ENCODE measurements at regions of chr10 and their contacts with region 1.

Region 1: DNA sequence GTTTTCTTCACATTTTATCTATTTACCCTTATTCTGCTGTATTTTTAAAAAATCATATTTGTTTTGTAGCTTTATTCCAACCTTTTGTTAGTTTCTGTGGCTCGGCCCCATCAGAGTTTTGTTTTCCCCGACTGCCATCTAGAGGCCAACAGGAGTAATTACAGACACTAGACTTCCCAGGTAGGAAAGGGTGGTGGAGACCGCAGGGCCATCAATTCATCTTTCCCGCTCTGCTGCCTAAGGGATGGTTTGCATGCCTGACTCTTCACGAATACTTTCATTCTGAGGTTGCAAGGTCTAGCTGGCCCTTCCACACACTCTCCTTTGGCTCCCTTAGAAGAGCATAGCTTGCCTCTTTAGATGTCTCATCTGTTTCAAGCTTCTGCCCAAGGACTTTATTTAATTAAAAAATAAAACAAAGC is 38.3 kb downstream of the LYZL2 start:
- DNase-seq: peak; percentile 59 to 77 (median 66)
- ATAC-seq: peak; percentile 83
- H3K4me3 ChIP-seq: no peak overlapping the region
- H3K27ac ChIP-seq: no peak overlapping the region
- H3K4me1 ChIP-seq: peaks cover 10% of the 10 kb centered on the region in 2 experiments; a peak in 3 of 5 replicates
- H3K27me3 ChIP-seq: 0 out of 5 replicates have a peak, but pooled peaks cover 0 to 4% of the 10 kb centered on the region in 2 experiments
- CTCF ChIP-seq: peak; percentile 69 to 85 (median 77)
- EP300 ChIP-seq: no peak
- POLR2A ChIP-seq: no peak
- RAD21 ChIP-seq: peak; percentile 88 to 89

Region 2: DNA sequence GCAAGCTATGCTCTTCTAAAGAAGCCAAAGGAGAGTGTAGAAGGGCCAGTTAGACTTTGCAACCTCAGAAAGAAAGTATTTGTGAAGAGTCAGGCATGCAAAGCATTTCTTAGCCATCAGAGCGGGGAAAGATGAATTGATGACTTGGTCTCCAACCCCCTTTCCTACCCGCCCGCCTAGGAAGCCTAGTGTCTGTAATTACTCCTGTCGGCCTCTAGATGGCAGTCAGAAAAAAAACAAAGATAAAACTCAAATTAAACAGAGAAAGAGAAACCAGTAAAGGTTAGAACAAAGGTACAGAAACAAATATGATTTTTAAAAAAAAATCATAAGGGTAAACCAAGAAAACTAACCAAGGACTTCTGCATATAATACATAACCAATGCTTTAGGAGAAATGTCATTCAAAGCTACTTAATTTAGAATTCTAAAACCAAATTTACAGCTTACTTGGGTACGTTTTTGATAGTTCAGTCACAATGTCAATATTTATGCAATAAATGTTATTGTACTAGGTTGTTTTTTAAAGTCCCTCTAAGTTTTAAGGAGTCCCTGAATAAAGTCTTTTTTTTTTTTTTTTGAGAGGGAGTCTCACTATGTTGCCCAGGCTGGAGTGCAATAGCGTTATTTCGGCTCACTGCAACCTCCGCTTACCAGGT is 1204.8 kb before region 1 on chr10:
- CTCF ChIA-PET with region 1: no interaction called
- POLR2A ChIA-PET with region 1: no interaction called
- in situ Hi-C with region 1: loop called (anchors 5 kb)
- intact Hi-C with region 1: no loop called
- DNase-seq: peak; percentile 34 to 51 (median 42)
- ATAC-seq: peak; percentile 58; the same call in 2 of the 3 replicates
- H3K4me3 ChIP-seq: no peak overlapping the region
- H3K27ac ChIP-seq: no peak overlapping the region
- H3K4me1 ChIP-seq: no peaks in the 10 kb centered on the region
- H3K27me3 ChIP-seq: peaks cover 17 to 39% of the 10 kb centered on the region in 2 experiments; a peak in 3 of 5 replicates
- CTCF ChIP-seq: peak; percentile 34 to 62 (median 55); a peak in 5 of 6 replicates
- EP300 ChIP-seq: no peak
- POLR2A ChIP-seq: no peak
- RAD21 ChIP-seq: peak; percentile 32 to 40; a peak in 3 of 4 replicates

Region 3: DNA sequence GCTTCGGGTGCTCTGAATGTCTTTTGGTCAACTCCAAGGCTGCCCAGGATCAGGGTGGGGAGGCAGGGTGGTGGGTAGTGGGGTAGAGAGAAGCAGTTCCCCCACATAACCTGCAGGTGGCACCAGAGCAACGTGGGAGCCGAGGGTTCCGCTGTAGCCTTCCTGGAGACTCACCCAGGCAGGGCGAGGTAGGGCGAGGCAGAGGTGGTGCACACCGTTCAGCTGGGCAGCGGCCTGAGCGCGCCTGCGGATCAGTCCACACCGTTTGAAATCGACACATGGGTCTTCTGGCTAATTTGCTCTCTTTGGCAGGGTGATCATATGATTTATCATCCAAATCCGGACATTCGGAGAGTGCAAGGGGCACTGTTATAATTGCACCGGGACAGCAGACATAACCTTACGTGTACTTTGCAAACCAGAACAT is 198.7 kb before region 1 on chr10:
- CTCF ChIA-PET with region 1: interaction called, 32 read pairs
- POLR2A ChIA-PET with region 1: interaction called, 3 read pairs
- in situ Hi-C with region 1: no loop called
- intact Hi-C with region 1: loop called (anchors 1 kb)
- DNase-seq: peak; percentile 82 to 88 (median 88)
- ATAC-seq: peak; percentile 99
- H3K4me3 ChIP-seq: no peak overlapping the region
- H3K27ac ChIP-seq: no peak overlapping the region
- H3K4me1 ChIP-seq: peaks cover 12 to 16% of the 10 kb centered on the region in 2 experiments
- H3K27me3 ChIP-seq: no peaks in the 10 kb centered on the region
- CTCF ChIP-seq: peak; percentile 78 to 90 (median 88)
- EP300 ChIP-seq: no peak
- POLR2A ChIP-seq: no peak
- RAD21 ChIP-seq: peak; percentile 91 to 95

Region 4: DNA sequence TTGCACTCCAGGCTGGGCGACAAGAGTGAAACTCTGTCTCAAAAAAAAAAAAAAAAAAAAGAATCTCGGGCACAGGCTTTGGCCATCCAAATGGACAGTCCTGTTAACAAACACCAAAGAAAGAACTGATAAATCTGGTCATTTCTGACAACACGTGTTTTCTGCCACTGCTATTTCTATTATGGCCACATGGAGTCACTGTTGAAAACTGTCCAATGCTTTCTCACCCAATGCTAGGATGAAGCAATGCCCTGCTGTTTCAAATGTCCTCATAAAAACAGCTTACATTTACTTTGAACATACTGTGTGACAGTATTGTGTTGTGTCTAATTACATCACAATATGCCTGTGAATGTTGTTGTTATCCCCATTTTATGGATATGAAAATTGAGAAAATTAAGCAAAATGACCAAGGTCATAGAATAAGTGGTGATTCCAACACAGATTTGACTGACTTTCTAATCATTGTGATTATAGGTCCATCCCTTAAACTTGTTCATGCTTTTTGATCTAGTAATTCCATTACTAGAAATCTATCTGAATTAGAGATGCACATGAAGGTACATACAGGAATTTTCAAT is 177.2 kb before region 1 on chr10:
- CTCF ChIA-PET with region 1: interaction called, 7 read pairs
- POLR2A ChIA-PET with region 1: no interaction called
- in situ Hi-C with region 1: no loop called
- intact Hi-C with region 1: loop called (anchors 5 kb)
- DNase-seq: peak; percentile 62 to 73 (median 68)
- ATAC-seq: peak; percentile 74
- H3K4me3 ChIP-seq: no peak overlapping the region
- H3K27ac ChIP-seq: no peak overlapping the region
- H3K4me1 ChIP-seq: peaks cover 5 to 14% of the 10 kb centered on the region in 2 experiments; a peak in 4 of 5 replicates
- H3K27me3 ChIP-seq: no peaks in the 10 kb centered on the region
- CTCF ChIP-seq: peak; percentile 77 to 86 (median 82)
- EP300 ChIP-seq: no peak
- POLR2A ChIP-seq: no peak
- RAD21 ChIP-seq: peak; percentile 92 to 95

Region 5: DNA sequence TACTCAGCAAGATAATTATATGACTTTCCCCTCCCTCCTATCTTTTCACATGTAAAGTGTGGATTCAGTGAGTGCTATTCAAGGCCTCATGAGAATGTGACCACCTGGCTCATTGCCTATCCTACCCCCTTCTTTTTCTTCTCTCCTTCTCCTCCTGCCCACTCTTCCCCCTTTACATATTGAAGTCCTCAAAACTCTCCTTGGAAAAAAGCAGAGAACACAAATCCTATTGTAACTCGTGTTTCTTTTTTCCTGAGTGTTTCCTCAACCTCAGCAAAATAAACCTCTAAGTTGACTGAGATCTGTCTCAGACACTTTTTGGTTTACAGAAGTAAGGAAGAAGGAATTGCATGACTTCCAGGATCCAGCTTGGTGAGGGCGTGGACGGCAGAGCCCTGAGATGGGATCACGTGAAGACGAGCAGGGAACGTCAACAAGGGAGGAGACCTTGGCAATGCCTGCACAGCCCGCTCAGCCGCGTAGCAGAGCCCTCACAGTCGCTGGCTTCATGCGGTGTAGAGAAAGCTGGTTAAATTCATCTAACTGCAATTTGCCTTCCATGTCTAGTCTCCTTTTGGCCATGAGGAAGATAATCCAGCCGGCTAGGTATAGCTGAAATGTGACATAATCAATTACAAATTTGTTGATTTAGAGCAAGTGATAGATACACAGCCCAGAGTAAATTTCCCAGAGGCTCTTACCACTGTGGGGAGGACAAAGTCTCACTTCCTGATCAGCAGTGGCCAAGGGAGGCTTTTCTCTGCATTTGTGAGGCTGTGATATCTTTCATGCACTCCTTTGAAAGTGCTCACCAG is 37.4 kb before region 1 on chr10:
- CTCF ChIA-PET with region 1: no interaction called
- POLR2A ChIA-PET with region 1: interaction called, 6 read pairs
- in situ Hi-C with region 1: no loop called
- intact Hi-C with region 1: loop called (anchors 2 kb)
- DNase-seq: peak; percentile 69 to 82 (median 70)
- ATAC-seq: peak; percentile 68
- H3K4me3 ChIP-seq: peak overlapping the region; percentile 10; the same call in 1 of the 2 replicates
- H3K27ac ChIP-seq: peak overlapping the region; percentile 97
- H3K4me1 ChIP-seq: peaks cover 20 to 37% of the 10 kb centered on the region in 2 experiments
- H3K27me3 ChIP-seq: no peaks in the 10 kb centered on the region
- CTCF ChIP-seq: no peak
- EP300 ChIP-seq: 0 out of 2 replicates have a peak, but pooled peaks have one; percentile 35
- POLR2A ChIP-seq: peak; percentile 36
- RAD21 ChIP-seq: no peak

Measured in K562 (cell line).